SK-MEL-5 (cell line): ENCODE measurements at regions of chr7 and their contacts with region 1.

Region 1: DNA sequence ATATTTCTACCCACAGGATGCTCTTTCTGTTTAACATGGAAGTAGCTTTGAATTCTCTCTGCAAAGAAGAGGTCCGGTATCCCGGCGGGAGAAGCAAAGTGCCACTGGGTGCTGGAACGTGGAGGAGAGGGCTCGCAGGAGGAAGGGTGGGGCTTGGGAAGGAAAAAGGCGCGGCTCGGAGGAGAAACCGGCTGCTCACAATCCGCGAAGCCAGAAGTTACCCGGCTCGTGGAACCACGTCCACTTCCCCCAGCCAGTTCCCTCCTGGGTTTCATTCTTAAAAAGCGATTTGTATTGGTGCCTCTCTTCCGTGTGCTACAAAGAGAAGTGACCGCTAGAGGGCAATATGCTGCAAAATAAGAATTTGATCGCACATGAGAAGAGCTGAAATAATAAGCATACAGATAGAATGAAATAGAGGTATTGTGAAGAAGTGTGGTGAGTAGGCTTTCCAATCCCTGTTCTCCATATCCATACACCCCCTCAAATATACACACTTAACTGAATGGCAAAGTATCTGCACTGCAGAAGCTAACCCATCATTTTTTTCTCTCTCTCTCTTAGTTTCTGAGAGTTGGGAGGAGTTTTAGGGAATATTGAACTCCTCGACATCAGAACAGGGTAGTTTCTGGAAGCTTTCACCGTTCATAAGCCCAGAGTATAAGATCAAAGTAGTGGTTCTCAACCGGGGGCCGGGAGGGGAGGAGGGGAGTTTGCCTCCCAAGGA is 31.1 kb downstream of the TRIL start:
- DNase-seq: peak; percentile 98

Region 2: GRCh38 chr7:28329661-28330363 is 597.2 kb before region 1 on chr7:
- in situ Hi-C with region 1: no loop called
- DNase-seq: no peak

Region 3: GRCh38 chr7:28509251-28510022 is 417.6 kb before region 1 on chr7:
- in situ Hi-C with region 1: no loop called
- DNase-seq: peak; percentile 82

Region 4: GRCh38 chr7:28980451-28980891 is 53.4 kb after region 1 on chr7:
- in situ Hi-C with region 1: no loop called
- DNase-seq: no peak

Region 5: GRCh38 chr7:29063236-29063635 is 136.2 kb after region 1 on chr7:
- in situ Hi-C with region 1: no loop called
- DNase-seq: no peak

Region 6: DNA sequence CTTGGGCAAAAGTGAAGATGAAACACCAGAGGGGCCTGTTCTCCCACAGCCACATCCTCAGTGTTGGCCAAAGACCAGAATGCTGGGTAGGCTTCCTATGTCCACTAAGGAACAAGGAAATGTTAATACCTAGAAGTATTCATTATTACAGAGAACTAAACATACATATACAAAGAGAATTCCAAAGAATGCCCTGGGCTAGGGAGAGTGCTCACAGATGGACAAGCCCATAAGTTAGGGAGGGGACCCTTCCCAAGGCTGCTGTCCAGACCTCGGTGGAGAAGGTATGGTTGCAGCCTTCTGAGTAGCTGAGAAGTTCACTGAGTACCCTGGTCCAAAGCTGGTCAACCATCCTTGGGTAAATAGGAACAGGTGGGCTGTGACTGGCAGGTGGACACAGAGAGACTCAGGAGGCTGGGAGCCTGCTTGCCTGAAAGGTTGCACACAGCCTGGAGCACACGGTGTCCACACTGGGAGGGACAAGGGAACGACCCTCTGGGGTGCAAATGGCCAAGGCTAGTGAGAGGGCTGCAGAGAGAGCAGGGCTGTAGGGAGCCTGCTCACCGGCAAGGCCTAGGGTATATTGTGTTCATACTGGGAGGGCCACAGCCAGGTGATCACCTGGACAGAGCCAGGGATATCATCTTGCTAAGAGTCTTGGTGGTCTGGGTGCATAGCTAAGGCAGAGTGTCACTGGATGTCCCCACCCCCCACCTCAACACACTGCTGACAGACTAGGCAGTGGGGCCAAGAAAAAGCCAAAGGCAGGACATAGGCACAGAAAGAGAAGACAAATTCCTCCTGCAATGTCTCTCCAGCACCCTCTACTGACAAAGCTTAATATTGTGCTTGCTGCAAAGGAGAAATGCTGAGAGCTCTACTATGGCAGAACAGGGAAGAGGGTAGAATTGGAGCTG is 179.0 kb after region 1 on chr7:
- in situ Hi-C with region 1: loop called (anchors 10 kb)
- DNase-seq: peak; percentile 89